ENCODE measurements at regions of chr20 and their contacts with region 1.

Region 1: DNA sequence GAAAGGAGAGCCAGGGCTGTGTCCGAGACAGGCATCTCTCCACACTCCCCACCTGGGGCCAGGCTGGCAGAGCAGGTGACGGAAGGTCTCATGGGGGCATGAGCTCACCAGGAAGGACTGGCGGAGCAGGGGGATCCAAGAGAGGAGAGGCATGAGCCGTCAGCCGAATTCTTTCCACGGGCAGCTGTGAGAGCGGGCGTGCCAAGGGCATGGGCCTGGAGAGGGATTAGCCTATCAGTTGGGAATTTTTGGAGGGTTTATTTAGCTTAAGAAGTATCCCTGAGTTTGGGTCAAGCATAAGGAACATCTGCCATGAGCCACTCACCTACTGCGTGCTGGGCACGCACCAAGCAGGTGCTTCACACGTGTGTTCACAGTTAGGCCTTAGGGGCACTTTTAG is 60.2 kb upstream of the ZNFX1 start:
- DNase-seq: no peak
- H3K4me3 ChIP-seq: no peak overlapping the region
- H3K27ac ChIP-seq: no peak overlapping the region
- H3K4me1 ChIP-seq: no peaks in the 10 kb centered on the region
- H3K27me3 ChIP-seq: no peaks in the 10 kb centered on the region
- CTCF ChIP-seq: no peak
- POLR2A ChIP-seq: no peak

Region 2: DNA sequence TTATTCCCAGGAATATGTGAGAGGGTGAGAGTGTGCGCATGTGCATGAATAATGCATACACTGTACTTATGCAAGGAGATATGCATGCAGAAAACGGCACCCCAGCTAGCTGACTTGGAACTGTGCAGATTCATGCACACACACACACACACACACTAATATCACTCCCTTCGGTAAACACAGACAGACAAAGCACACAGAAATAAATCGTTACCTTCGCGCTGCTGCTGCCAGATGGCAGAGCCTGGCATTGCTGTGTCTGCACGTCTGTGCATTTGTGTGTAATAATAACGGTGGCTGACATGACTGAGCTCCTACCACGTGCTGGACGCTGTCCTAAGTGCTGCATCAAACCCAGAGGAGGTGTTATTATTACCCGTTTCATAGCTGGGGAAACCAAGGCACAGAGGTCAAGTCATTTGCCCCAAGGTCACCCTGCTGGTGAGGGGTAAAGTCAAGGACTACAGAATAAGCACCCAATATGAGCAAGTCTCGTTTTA is 547.0 kb before region 1 on chr20:
- intact Hi-C with region 1: no loop called
- DNase-seq: peak in 1 of 2 donors; percentile 27
- H3K4me3 ChIP-seq: no peak overlapping the region
- H3K27ac ChIP-seq: peak overlapping the region in 1 of 3 donors; percentile 33
- H3K4me1 ChIP-seq: peaks cover 16 to 29% of the 10 kb centered on the region in 2 donors
- H3K27me3 ChIP-seq: no peaks in the 10 kb centered on the region
- CTCF ChIP-seq: no peak
- POLR2A ChIP-seq: no peak

Region 3: GRCh38 chr20:49476016-49476355 is 137.9 kb after region 1 on chr20:
- intact Hi-C with region 1: no loop called
- DNase-seq: no peak
- H3K4me3 ChIP-seq: no peak overlapping the region
- H3K27ac ChIP-seq: no peak overlapping the region
- H3K4me1 ChIP-seq: no peaks in the 10 kb centered on the region
- H3K27me3 ChIP-seq: no peaks in the 10 kb centered on the region
- CTCF ChIP-seq: no peak
- POLR2A ChIP-seq: no peak

Region 4: DNA sequence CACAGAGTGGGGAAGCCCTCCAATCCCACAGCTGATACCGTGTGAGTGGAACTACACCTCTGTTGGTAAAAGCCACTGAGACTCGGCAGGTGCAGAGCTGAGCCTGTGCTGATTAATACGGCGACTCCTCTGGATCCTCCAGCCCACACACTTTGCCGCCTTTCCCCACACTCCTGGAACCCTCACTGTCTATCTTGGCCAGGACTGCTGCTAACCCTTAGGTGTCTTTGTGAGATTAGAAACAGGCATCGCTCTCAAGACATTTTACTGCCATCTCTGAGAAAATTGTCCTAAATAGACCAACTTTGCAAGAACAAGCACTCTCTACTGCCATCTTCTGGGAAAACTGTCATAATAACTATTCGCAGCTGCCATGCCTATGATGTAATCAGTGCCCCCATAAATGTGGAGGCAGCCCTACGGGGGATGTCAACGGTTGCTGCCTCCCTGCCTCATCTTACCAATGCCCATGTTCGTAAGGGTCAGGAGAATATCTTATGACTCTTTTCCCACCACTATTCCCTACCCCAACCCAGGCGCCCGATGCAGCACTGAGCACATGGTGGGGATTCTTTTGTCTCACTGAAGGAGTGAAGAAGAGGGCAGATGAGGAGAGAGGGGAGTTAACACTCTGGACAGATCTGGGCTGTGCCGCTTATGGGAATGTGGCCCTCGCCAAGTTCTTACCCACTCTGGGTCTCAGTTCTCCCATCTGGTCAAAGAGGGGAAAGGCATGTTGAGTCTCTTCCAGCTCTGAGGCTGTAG is 170.6 kb after region 1 on chr20:
- intact Hi-C with region 1: loop called (anchors 5 kb)
- DNase-seq: no peak
- H3K4me3 ChIP-seq: no peak overlapping the region
- H3K27ac ChIP-seq: no peak overlapping the region
- H3K4me1 ChIP-seq: no peaks in the 10 kb centered on the region
- H3K27me3 ChIP-seq: no peaks in the 10 kb centered on the region
- CTCF ChIP-seq: peak in 5 of 6 experiments; percentile 29 to 53 (median 45)
- POLR2A ChIP-seq: no peak

Measured in thyroid gland (tissue), 4 donors.